ENCODE measurements at regions of chr6 and their contacts with region 1.

Region 1: DNA sequence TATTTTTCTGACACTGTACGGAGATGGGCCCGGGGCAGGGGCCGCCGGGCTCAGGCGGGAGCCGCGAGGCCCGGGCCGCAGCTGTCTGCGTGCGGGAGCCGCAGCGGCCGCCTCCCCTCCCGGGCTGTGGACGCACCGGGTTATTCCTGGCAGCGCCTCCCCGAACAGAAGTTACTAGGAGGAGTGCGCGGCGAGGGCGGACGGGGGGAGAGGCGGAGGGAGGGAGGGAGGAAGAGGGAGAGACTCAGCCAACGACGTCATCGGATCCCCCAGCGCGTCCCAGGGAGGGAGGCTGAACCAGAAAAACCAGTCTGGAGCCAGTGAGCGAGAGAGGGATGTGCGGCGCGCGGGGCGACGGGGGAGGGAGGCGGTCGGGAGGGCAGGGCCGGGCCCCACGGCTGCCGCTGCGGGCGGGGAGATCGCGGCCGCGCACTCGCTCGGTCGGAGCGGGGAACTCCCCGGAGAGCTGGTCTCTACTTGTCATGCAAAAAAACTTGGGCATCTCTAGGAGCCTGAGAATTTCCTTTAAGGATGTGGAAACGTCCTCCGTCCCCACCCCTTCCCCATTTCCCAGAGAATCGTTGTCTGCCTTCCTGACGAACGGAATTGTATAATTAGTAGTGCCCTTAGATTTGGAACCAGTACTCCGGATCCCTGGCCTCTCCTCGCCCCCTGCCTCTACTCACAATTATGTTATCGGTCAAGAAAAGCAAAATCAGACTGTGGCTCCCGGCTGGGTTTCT is 1.4 kb upstream of the HIVEP2 start:
- DNase-seq: peak; percentile 79 to 98 (median 90)
- ATAC-seq: peak; percentile 41
- H3K4me3 ChIP-seq: peak overlapping the region; percentile 73 to 95
- H3K4me3 Mint-ChIP-seq: peak overlapping the region; percentile 99
- H3K27ac ChIP-seq: peak overlapping the region; percentile 96 to 97
- H3K27ac Mint-ChIP-seq: peak overlapping the region; percentile 96
- H3K4me1 ChIP-seq: peaks cover 27% of the 10 kb centered on the region
- H3K4me1 Mint-ChIP-seq: peaks cover 36% of the 10 kb centered on the region
- H3K27me3 ChIP-seq: no peaks in the 10 kb centered on the region
- H3K27me3 Mint-ChIP-seq: no peaks in the 10 kb centered on the region
- CTCF ChIP-seq: no peak

Region 2: GRCh38 chr6:142301651-142302370 is 644.5 kb before region 1 on chr6 and contains the start of gene ADGRG6:
- CTCF ChIA-PET with region 1: no interaction called
- POLR2A ChIA-PET with region 1: no interaction called
- intact Hi-C with region 1: no loop called
- DNase-seq: peak in 8 of 9 experiments; percentile 4 to 69 (median 38)
- ATAC-seq: peak; percentile 70
- H3K4me3 ChIP-seq: peak within 1 kb of the TSS; percentile 42 to 61
- H3K4me3 Mint-ChIP-seq: peak within 1 kb of the TSS; percentile 85
- H3K27ac ChIP-seq: no peak within 1 kb of the TSS
- H3K27ac Mint-ChIP-seq: peak within 1 kb of the TSS; percentile 66
- H3K4me1 ChIP-seq: peaks cover 4% of the 10 kb centered on the region
- H3K4me1 Mint-ChIP-seq: peaks cover 15% of the 10 kb centered on the region
- H3K27me3 ChIP-seq: no peaks in the 10 kb centered on the region
- H3K27me3 Mint-ChIP-seq: peaks cover 15% of the 10 kb centered on the region
- CTCF ChIP-seq: no peak
- total RNA-seq, gene ADGRG6: 0.54 to 0.61 TPM

Region 3: GRCh38 chr6:142902636-142903053 is 43.7 kb before region 1 on chr6:
- CTCF ChIA-PET with region 1: no interaction called
- POLR2A ChIA-PET with region 1: interaction called, 7 read pairs
- intact Hi-C with region 1: loop called (anchors 1 kb)
- DNase-seq: peak; percentile 53 to 95 (median 81)
- ATAC-seq: peak; percentile 58
- H3K4me3 ChIP-seq: peak overlapping the region; percentile 1 to 33
- H3K4me3 Mint-ChIP-seq: peak overlapping the region; percentile 70
- H3K27ac ChIP-seq: peak overlapping the region; percentile 82 to 87
- H3K27ac Mint-ChIP-seq: peak overlapping the region; percentile 98
- H3K4me1 ChIP-seq: peaks cover 91% of the 10 kb centered on the region
- H3K4me1 Mint-ChIP-seq: peaks cover 63% of the 10 kb centered on the region
- H3K27me3 ChIP-seq: no peaks in the 10 kb centered on the region
- H3K27me3 Mint-ChIP-seq: no peaks in the 10 kb centered on the region
- CTCF ChIP-seq: no peak

Region 4: GRCh38 chr6:142913511-142914047 is 32.8 kb before region 1 on chr6:
- CTCF ChIA-PET with region 1: interaction called, 3 read pairs
- POLR2A ChIA-PET with region 1: interaction called, 5 read pairs
- intact Hi-C with region 1: loop called (anchors 1 to 5 kb)
- DNase-seq: peak; percentile 39 to 92 (median 73)
- ATAC-seq: peak; percentile 90
- H3K4me3 ChIP-seq: peak overlapping the region; percentile 41 to 43
- H3K4me3 Mint-ChIP-seq: peak overlapping the region; percentile 82
- H3K27ac ChIP-seq: peak overlapping the region; percentile 78 to 95
- H3K27ac Mint-ChIP-seq: peak overlapping the region; percentile 99
- H3K4me1 ChIP-seq: peaks cover 74% of the 10 kb centered on the region
- H3K4me1 Mint-ChIP-seq: peaks cover 82% of the 10 kb centered on the region
- H3K27me3 ChIP-seq: no peaks in the 10 kb centered on the region
- H3K27me3 Mint-ChIP-seq: no peaks in the 10 kb centered on the region
- CTCF ChIP-seq: peak; percentile 50

Region 5: DNA sequence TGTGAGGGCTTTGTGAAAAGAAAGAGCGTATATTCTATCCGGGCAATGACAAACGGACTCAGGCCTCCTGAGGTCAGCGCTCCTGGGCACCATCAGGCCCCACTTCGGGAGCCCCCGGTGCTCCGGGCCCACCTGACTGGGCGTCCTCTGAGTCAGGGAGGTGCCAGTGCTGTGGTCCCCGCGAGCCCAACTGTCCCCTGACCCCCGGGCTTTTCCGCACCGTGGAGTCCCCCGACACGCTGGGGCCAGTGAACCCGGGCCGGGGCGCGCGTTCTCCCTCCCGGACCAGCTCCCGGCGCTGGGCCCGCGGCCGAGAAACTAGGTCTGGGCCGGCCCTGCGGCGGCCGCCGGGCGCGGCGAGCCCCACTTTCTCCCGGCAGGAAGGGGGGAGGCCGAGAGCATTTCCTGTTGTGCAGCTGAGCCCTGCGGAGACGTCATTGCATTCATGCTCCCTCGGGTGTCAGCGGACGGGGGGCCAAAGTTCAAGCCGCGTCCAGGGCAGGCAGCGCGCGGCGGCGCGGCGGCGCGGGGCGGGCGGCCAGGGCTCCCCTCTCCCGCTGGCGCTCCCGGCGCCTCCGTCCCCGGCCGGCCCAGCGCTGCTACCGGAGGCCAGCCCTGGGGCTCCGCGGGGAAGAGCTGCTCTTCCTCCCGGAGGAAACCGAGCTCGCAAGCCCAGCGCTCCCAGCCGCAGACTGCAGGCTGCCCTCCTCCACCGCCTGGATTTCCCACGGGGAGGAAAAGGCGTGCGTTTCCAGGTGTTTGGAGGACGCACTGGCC is 19.7 kb before region 1 on chr6:
- CTCF ChIA-PET with region 1: interaction called, 15 read pairs
- POLR2A ChIA-PET with region 1: interaction called, 43 read pairs
- intact Hi-C with region 1: loop called (anchors 1 kb)
- DNase-seq: peak; percentile 68 to 93 (median 81)
- ATAC-seq: peak; percentile 81
- H3K4me3 ChIP-seq: peak overlapping the region; percentile 76 to 86
- H3K4me3 Mint-ChIP-seq: peak overlapping the region; percentile 91
- H3K27ac ChIP-seq: peak overlapping the region; percentile 99
- H3K27ac Mint-ChIP-seq: peak overlapping the region; percentile 98
- H3K4me1 ChIP-seq: peaks cover 47% of the 10 kb centered on the region
- H3K4me1 Mint-ChIP-seq: peaks cover 63% of the 10 kb centered on the region
- H3K27me3 ChIP-seq: no peaks in the 10 kb centered on the region
- H3K27me3 Mint-ChIP-seq: no peaks in the 10 kb centered on the region
- CTCF ChIP-seq: no peak

Region 6: GRCh38 chr6:143060354-143060805 is 114.0 kb after region 1 on chr6:
- CTCF ChIA-PET with region 1: no interaction called
- POLR2A ChIA-PET with region 1: no interaction called
- intact Hi-C with region 1: loop called in 1 of 2 experiments (anchors 1 kb)
- DNase-seq: peak; percentile 49 to 89 (median 75)
- ATAC-seq: peak; percentile 66
- H3K4me3 ChIP-seq: peak overlapping the region; percentile 90 to 92
- H3K4me3 Mint-ChIP-seq: peak overlapping the region; percentile 92
- H3K27ac ChIP-seq: peak overlapping the region; percentile 67 to 81
- H3K27ac Mint-ChIP-seq: peak overlapping the region; percentile 93
- H3K4me1 ChIP-seq: peaks cover 17% of the 10 kb centered on the region
- H3K4me1 Mint-ChIP-seq: peaks cover 21% of the 10 kb centered on the region
- H3K27me3 ChIP-seq: no peaks in the 10 kb centered on the region
- H3K27me3 Mint-ChIP-seq: no peaks in the 10 kb centered on the region
- CTCF ChIP-seq: no peak

Region 7: DNA sequence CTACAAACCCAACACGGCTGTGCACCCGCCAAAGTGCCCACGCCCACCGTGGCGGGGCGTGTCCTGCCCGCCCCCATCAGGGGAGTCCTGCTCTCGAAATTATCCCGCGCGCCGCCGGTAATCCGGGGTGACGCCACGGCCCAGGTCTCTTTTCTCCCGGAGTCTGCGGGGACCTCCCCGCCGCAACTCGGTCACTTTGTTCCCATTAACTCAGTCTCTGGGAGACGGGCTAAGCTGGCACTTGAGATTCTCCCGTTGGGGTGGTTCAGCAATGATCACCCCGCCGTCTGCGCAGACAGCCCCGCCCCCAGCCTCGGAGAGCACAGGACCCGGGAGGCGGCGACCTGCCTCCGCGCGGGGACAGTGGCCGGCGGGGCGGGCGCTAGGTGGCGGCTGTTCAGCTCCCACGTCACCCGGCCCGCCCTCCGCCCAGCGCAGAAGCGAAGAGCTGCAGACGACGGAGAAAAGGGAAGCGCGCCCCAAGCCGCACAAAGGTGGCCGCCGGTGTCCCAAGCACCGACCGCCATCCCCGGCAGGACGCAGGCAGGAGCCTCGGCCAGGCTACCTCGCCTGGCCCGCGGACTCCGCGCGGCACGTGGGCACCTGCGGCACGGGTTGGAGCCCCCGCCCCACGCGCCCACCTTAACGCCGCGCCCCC is 1117.5 kb after region 1 on chr6:
- CTCF ChIA-PET with region 1: no interaction called
- POLR2A ChIA-PET with region 1: no interaction called
- intact Hi-C with region 1: loop called in 1 of 2 experiments (anchors 10 kb)
- DNase-seq: peak; percentile 85 to 96 (median 91)
- ATAC-seq: peak; percentile 90
- H3K4me3 ChIP-seq: peak overlapping the region; percentile 93 to 97
- H3K4me3 Mint-ChIP-seq: peak overlapping the region; percentile 91
- H3K27ac ChIP-seq: peak overlapping the region; percentile 86 to 88
- H3K27ac Mint-ChIP-seq: peak overlapping the region; percentile 95
- H3K4me1 ChIP-seq: peaks cover 16% of the 10 kb centered on the region
- H3K4me1 Mint-ChIP-seq: peaks cover 30% of the 10 kb centered on the region
- H3K27me3 ChIP-seq: no peaks in the 10 kb centered on the region
- H3K27me3 Mint-ChIP-seq: no peaks in the 10 kb centered on the region
- CTCF ChIP-seq: no peak